ENCODE measurements at regions of chr10 and their contacts with region 1.

Region 1: DNA sequence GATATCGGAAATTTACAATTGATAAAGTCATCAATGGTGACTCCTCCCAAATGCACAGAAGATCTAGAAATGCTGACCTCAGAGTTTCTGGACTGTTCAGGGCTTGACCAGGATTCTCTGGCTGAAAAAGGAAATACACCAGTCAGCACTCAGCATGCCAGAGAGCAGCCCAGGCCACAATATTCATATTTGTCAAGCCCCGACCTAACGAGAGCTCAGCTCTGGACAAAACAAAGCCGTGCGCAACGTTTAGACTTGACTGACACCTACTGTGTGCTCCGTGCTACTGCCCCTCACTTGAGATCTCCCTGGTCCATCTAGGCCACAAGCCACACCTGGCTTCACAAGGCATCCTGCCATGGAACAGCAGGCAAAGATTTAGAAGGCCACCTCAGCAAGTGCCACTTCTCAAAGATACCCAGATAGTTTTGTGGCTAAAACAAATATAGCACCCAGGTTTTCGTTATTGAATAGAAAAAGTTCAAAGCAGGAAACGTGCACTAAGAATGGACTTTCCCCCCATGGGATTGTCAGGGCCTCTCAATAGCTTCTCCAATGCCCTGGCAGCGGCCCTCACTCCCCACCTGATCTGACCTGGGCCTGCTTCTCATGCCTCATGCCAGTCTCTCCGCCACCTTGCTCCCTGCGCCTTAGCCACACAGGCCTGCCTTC is 218.3 kb downstream of the FAM107B start:
- DNase-seq: peak; percentile 61
- H3K4me3 Mint-ChIP-seq: peak overlapping the region; percentile 44
- H3K27ac Mint-ChIP-seq: peak overlapping the region; percentile 76
- H3K4me1 Mint-ChIP-seq: peaks cover 90% of the 10 kb centered on the region
- H3K27me3 Mint-ChIP-seq: no peaks in the 10 kb centered on the region
- CTCF ChIP-seq: peak; percentile 33

Region 2: DNA sequence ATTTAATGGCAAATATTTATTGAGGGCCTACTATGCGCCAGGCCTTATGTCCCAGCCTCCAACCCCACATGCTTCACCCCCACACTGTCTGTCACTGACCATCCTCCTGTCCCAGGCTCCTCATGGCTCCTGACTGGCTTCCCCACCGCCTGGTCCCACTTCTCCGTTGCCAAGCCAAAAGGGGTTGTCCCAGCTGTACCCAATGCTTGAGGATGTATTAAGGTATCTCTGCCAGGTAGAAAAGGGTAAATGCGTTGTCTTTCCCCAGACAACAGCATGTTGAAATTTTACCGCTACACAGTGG is 56.9 kb before region 1 on chr10:
- CTCF ChIA-PET with region 1: no interaction called
- intact Hi-C with region 1: loop called (anchors 2 kb)
- DNase-seq: no peak
- H3K4me3 Mint-ChIP-seq: no peak overlapping the region
- H3K27ac Mint-ChIP-seq: no peak overlapping the region
- H3K4me1 Mint-ChIP-seq: no peaks in the 10 kb centered on the region
- H3K27me3 Mint-ChIP-seq: no peaks in the 10 kb centered on the region
- CTCF ChIP-seq: no peak

Region 3: DNA sequence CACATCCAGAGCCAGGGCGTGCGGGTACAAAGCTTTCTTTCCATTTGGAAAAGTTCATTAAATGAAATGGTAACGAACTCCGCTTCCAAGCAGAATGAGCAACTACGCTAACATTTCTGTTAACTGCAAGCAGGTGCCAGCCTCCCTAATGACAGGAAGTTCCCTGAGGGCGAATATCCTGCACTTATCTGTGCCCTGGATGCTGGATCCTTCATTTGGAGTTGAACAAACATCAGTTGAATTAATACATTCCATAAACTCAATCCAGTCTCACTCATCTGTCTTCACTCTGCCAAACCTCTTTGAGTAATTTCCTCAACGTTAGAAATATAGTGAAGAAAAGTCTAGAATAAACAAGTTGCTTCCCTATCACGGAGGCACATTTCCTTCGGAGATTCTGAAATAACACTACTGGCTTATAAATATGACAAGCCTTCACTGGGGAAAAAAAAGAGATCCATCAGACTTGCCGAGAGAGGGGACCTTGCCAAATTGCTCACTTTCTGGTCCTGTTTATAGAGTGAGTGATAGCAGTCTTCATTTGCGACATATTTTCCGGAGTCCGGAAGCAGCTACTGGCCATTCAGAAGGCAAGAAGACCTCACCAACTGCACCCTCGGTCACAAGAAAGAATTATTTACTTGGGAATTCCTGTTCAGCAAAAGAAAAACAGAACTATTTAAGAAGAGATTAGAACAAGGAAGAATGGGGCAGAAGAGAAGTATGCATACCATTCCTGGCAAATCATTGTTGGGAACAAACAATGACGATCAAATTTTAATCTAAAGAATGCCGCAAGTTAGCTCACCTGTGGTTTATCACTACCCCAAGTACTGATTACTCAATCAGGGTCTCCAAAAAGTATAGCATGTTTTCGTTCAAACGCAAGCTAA is 21.9 kb after region 1 on chr10:
- CTCF ChIA-PET with region 1: interaction called, 10 read pairs
- intact Hi-C with region 1: no loop called
- DNase-seq: peak; percentile 67
- H3K4me3 Mint-ChIP-seq: peak overlapping the region; percentile 61
- H3K27ac Mint-ChIP-seq: peak overlapping the region; percentile 93
- H3K4me1 Mint-ChIP-seq: peaks cover 54% of the 10 kb centered on the region
- H3K27me3 Mint-ChIP-seq: no peaks in the 10 kb centered on the region
- CTCF ChIP-seq: no peak

Measured in Calu3 (cell line).